ENCODE measurements at regions of chr4 and their contacts with region 1.

Region 1: GRCh38 chr4:155667568-155668511 is 1.2 kb downstream of the GUCY1A1 start:
- DNase-seq: peak; percentile 45
- ATAC-seq: peak; percentile 52
- H3K4me3 ChIP-seq: peak overlapping the region; percentile 87
- H3K27ac ChIP-seq: peak overlapping the region; percentile 66
- H3K4me1 ChIP-seq: peaks cover 27% of the 10 kb centered on the region
- H3K27me3 ChIP-seq: no peaks in the 10 kb centered on the region
- CTCF ChIP-seq: no peak

Region 2: DNA sequence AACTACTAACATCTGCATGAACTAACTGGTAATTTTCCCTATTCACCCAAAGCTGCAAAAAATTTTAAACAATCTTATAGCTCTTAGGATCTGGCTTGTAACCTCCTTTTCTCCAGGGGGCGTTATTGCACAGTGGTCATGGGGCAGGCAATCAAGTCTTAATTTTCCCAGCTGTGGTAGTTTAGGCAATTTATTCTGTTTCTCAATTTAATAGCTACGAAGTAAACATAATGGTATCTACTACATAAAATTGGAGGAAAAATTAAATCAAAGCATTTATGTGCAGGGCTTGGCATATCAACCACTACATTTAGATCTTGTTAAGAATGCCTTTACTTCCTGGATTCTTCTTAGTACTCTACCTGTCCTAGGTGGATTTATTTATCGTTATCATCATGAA is 138.6 kb before region 1 on chr4:
- CTCF ChIA-PET with region 1: no interaction called
- POLR2A ChIA-PET with region 1: no interaction called
- intact Hi-C with region 1: loop called (anchors 5 kb)
- DNase-seq: peak; percentile 44
- ATAC-seq: no peak
- H3K4me3 ChIP-seq: peak overlapping the region; percentile 14; the same call in 1 of the 2 replicates
- H3K27ac ChIP-seq: peak overlapping the region; percentile 96
- H3K4me1 ChIP-seq: peaks cover 38% of the 10 kb centered on the region
- H3K27me3 ChIP-seq: no peaks in the 10 kb centered on the region
- CTCF ChIP-seq: peak; percentile 68

Region 3: GRCh38 chr4:155629183-155629825 is 38.5 kb before region 1 on chr4:
- CTCF ChIA-PET with region 1: no interaction called
- POLR2A ChIA-PET with region 1: no interaction called
- intact Hi-C with region 1: loop called (anchors 1 kb)
- DNase-seq: peak; percentile 65
- ATAC-seq: peak; percentile 75
- H3K4me3 ChIP-seq: peak overlapping the region; percentile 30; the same call in 1 of the 2 replicates
- H3K27ac ChIP-seq: peak overlapping the region; percentile 67
- H3K4me1 ChIP-seq: peaks cover 24% of the 10 kb centered on the region
- H3K27me3 ChIP-seq: no peaks in the 10 kb centered on the region
- CTCF ChIP-seq: no peak